Activated CD8-positive, alpha-beta T cell treated with anti-CD3 and anti-CD28 coated beads for 36 hours (primary cell): ENCODE measurements at regions of chr11 and their contacts with region 1.

Region 1: DNA sequence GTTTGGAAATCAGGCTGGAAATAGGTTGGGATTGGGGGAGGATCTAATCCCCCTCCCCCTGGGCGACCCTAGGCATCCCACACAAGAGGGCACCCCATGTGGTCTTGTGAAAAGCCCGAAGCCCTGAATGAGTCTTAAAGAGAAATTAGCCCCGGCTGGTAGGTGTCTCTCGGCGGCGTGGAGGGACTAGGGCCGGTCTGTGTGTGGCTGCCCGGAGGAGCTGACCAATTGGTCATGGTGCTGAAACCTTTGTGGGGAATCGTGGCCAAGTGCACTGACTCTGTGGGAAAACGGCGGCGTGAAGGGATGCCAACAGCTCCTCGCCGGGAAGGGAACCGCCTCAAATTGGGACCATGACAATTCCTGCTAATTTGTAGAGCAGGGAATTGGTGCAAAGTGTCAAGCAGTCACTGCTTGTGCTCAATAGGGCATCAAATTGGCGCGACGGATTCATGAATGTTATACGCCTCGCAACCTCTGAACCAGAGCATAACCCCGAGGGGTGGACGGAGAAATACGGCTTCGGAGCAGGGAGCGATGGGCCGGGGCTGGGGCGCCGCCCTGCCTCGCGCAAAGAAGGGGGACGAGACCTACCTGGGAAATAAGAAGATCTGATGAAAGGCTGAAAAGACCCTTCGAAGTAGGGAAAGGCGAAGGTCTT is 1.5 kb downstream of the DBX1 start:
- DNase-seq: peak; percentile 27
- ATAC-seq: no peak
- H3K4me3 Mint-ChIP-seq: no peak overlapping the region
- H3K27ac Mint-ChIP-seq: no peak overlapping the region
- H3K4me1 Mint-ChIP-seq: peaks cover 25% of the 10 kb centered on the region
- H3K27me3 Mint-ChIP-seq: peaks cover 73% of the 10 kb centered on the region
- CTCF ChIP-seq: no peak

Region 2: DNA sequence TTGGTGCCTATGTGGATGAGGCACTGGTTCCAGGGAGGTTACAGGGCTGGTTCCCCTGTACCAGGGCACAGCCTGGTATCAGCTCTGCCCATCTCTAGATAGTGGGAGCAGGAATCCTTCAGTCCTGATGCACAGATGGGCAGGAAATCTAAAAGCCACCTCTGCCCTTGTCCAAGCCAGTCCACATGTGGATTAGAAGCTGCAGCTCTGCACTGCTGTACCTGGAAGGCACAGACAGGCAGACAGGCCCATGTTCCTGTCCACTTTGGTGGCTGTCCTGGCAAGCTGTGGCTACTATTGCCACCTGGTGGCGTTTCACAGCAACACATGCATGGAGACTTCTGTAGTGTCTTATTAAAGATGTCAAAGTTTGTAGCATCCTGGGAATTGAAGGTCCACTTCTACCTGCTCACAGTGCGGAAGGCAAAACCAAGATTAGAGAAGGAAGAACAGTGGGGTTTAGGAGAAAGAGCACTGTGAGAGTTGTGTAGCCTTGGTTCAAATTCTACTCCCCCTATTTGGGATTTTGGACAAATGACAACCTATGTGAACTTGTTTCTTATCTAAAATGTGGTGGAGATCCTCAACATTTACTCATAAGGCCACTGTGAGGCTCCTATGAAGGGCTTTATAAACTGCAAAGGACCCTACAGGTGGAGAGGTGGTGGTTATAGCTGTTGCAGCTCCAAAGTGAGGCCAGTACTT is 416.0 kb before region 1 on chr11:
- CTCF ChIA-PET with region 1: no interaction called
- POLR2A ChIA-PET with region 1: no interaction called
- intact Hi-C with region 1: no loop called
- DNase-seq: peak; percentile 77
- ATAC-seq: peak; percentile 84
- H3K4me3 Mint-ChIP-seq: no peak overlapping the region
- H3K27ac Mint-ChIP-seq: no peak overlapping the region
- H3K4me1 Mint-ChIP-seq: no peaks in the 10 kb centered on the region
- H3K27me3 Mint-ChIP-seq: peaks cover 6% of the 10 kb centered on the region
- CTCF ChIP-seq: peak; percentile 72

Region 3: GRCh38 chr11:20221566-20221965 is 62.8 kb after region 1 on chr11:
- CTCF ChIA-PET with region 1: no interaction called
- POLR2A ChIA-PET with region 1: no interaction called
- intact Hi-C with region 1: no loop called
- DNase-seq: no peak
- ATAC-seq: no peak
- H3K4me3 Mint-ChIP-seq: no peak overlapping the region
- H3K27ac Mint-ChIP-seq: no peak overlapping the region
- H3K4me1 Mint-ChIP-seq: no peaks in the 10 kb centered on the region
- H3K27me3 Mint-ChIP-seq: peaks cover 14% of the 10 kb centered on the region
- CTCF ChIP-seq: no peak

Region 4: DNA sequence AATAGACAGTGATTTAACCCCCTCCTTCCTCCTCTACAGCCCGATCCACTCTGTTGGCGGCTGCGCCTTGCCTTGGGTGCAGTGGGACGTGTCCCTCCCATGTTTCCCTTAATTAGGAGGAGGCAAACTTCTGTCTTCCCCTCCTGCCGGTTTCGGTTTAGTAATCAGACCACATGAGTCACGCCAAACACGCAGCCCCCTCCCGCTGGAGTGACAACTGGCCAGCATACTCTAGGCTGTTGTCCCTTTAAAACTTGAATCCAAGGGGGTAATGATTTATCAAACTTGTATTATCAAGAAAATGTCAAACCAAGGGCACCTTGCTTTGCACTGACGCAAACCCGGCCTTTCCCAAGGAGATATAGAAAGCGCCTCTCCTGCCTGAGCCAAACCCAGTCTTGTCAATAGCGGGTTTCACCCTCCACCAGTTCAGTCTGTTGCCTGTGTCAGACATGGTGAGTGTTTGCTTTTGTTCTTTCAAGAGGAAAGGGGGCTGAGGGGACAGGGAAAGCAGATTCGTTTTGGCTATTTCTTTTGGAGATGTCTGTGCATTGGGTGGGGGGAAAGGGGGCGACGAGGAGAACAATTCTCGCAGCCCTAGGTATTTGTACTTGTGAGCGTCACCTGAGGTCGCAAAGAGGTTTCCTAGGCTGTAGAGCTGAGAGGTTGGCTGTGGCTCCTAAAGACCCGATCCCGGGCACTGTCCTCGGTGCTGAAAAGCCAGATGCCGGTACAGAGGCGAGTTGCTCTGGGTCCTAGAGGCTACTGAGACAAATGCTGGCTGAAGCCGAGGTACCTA is 440.7 kb after region 1 on chr11 and contains the start of gene SLC6A5:
- CTCF ChIA-PET with region 1: no interaction called
- POLR2A ChIA-PET with region 1: no interaction called
- intact Hi-C with region 1: loop called (anchors 10 kb)
- DNase-seq: peak; percentile 63
- ATAC-seq: no peak
- H3K4me3 Mint-ChIP-seq: no peak within 1 kb of the TSS
- H3K27ac Mint-ChIP-seq: no peak within 1 kb of the TSS
- H3K4me1 Mint-ChIP-seq: peaks cover 5% of the 10 kb centered on the region
- H3K27me3 Mint-ChIP-seq: peaks cover 92% of the 10 kb centered on the region
- CTCF ChIP-seq: no peak
- total RNA-seq, gene SLC6A5: not detected